Ascending aorta (tissue), 2 donors: ENCODE measurements at regions of chr14 and their contacts with region 1.

Region 1: GRCh38 chr14:69317104-69317755 is 57.3 kb downstream of the GALNT16 start:
- DNase-seq: peak; percentile 25 to 87
- H3K4me3 ChIP-seq: no peak overlapping the region
- H3K27ac ChIP-seq: peak overlapping the region; percentile 28 to 63
- H3K4me1 ChIP-seq: peaks cover 0 to 7% of the 10 kb centered on the region in 2 donors
- H3K27me3 ChIP-seq: no peaks in the 10 kb centered on the region
- CTCF ChIP-seq: no peak

Region 2: GRCh38 chr14:69354383-69355153 is 37.3 kb after region 1 on chr14:
- intact Hi-C with region 1: loop called (anchors 5 kb)
- DNase-seq: no peak
- H3K4me3 ChIP-seq: no peak overlapping the region
- H3K27ac ChIP-seq: peak overlapping the region; percentile 85 to 88
- H3K4me1 ChIP-seq: peaks cover 2 to 19% of the 10 kb centered on the region in 2 donors
- H3K27me3 ChIP-seq: no peaks in the 10 kb centered on the region
- CTCF ChIP-seq: no peak

Region 3: DNA sequence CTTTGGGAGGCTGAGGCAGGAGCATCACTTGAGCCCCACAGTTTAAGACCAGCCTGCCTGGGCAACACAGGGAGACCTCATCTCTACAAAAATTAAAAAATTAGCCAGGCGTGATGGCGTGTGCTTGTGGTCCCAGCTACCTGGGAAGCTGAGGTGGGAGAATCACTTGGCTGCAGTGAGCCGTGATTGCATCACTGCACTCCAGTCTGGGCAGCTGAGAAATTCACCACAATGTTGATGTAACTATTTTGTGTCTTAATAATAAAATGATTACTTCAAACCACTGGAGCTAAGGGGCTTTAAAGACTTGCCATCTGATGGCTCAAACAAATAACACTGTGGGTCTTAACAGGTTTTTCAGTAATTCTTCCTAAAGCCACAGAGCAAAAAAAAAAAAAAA is 70.1 kb after region 1 on chr14:
- intact Hi-C with region 1: loop called (anchors 2 kb)
- DNase-seq: no peak
- H3K4me3 ChIP-seq: no peak overlapping the region
- H3K27ac ChIP-seq: no peak overlapping the region
- H3K4me1 ChIP-seq: peaks cover 0 to 5% of the 10 kb centered on the region in 2 donors
- H3K27me3 ChIP-seq: no peaks in the 10 kb centered on the region
- CTCF ChIP-seq: no peak